ENCODE measurements at regions of chr3 and their contacts with region 1.

Region 1: DNA sequence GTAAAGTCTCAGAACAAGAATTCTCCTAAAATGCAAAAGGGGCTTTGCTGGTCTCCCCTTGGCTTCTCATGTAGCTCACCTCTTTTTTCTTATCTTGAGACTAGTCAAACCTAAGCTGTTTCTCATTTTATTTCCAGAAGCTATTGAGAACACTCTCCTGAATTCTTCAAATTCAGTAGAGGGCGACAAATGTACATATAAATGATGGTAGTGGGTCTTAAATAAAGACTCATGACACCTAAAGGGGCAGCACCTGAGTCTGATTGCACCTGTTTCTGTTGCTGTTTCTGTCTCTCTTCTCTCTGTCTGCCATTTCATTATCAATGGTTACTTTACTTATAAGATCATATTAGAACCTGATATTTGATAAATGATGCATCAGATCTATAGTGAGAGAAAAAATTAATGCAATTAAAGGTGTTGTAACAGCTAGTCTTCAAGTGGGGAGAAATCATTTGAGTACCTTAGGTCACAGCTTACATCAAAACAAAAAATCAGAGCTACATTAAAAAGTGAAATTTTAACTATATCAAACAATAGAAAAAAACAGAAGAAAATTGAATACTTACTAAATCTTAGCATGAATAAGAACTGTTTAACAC is 7.0 kb downstream of the ADIPOQ start:
- DNase-seq: no peak
- ATAC-seq: peak; percentile 79
- H3K4me3 Mint-ChIP-seq: no peak overlapping the region
- H3K27ac Mint-ChIP-seq: peak overlapping the region; percentile 41
- H3K4me1 Mint-ChIP-seq: peaks cover 13% of the 10 kb centered on the region
- H3K27me3 Mint-ChIP-seq: peaks cover 10% of the 10 kb centered on the region
- CTCF ChIP-seq: no peak

Region 2: GRCh38 chr3:186826976-186827731 is 22.3 kb before region 1 on chr3:
- CTCF ChIA-PET with region 1: interaction called, 11 read pairs
- POLR2A ChIA-PET with region 1: interaction called, 7 read pairs
- intact Hi-C with region 1: no loop called
- DNase-seq: peak; percentile 85
- ATAC-seq: peak; percentile 94
- H3K4me3 Mint-ChIP-seq: peak overlapping the region; percentile 71
- H3K27ac Mint-ChIP-seq: no peak overlapping the region
- H3K4me1 Mint-ChIP-seq: peaks cover 22% of the 10 kb centered on the region
- H3K27me3 Mint-ChIP-seq: peaks cover 47% of the 10 kb centered on the region
- CTCF ChIP-seq: no peak

Region 3: DNA sequence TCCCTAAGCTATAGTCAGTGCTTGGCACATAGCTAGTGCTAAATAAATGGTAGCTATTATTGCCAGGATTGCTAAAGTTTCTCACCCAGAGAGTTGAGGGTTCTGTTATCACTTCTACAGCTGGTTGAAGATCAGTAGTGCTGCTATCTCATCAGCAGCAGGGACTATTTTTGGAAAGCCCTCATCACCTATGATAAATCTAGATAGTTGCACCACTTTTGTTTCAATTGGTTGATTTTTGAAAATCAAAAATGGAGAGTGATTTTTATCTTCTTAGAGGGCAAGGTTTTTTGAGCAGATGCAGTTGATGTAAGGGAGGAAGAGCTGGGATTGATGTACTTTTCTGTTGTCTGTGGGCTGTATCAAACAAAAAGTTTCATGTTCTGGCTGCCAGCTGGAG is 182.5 kb after region 1 on chr3:
- CTCF ChIA-PET with region 1: interaction called, 12 read pairs
- POLR2A ChIA-PET with region 1: no interaction called
- intact Hi-C with region 1: no loop called
- DNase-seq: no peak
- ATAC-seq: no peak
- H3K4me3 Mint-ChIP-seq: peak overlapping the region; percentile 69
- H3K27ac Mint-ChIP-seq: peak overlapping the region; percentile 86
- H3K4me1 Mint-ChIP-seq: peaks cover 90% of the 10 kb centered on the region
- H3K27me3 Mint-ChIP-seq: no peaks in the 10 kb centered on the region
- CTCF ChIP-seq: no peak

Region 4: DNA sequence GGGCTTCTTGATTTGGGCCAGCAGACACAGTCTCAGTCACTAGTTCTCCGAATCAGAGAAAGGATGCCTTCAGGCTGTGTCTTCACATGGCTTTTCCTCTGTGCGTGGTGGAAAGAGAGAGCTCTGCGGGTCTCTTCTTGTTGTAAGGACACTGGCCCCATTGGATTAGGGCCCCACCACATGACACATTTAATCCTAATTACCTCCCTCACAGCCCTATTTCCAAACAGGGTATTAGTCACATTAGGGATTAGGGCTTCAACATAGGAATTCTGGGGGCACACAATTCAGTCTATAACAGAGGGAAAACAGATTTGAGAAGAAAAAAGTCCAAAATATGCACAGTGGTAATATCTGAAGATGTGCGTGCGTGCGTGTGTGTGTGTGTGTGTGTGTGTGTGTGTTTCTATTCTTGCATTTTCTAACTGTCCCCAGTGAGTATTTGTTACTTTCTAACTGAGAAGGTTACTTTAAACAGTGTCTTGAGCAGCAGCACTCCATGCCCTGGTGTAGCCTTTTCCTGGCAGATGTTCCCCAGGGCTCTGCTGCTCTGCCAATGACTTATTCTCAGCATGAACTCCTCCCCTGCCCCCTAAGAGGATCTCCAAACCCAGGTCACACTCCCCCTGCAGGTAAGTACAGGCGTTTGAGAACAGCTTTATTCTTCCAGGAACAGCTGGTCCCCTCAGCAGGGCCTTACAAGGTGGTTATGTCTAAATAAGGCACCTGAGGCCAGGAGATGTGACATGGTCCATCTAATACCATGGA is 216.9 kb after region 1 on chr3:
- CTCF ChIA-PET with region 1: interaction called, 37 read pairs
- POLR2A ChIA-PET with region 1: interaction called, 4 read pairs
- intact Hi-C with region 1: loop called (anchors 1 kb)
- DNase-seq: no peak
- ATAC-seq: peak; percentile 39
- H3K4me3 Mint-ChIP-seq: peak overlapping the region; percentile 68
- H3K27ac Mint-ChIP-seq: peak overlapping the region; percentile 92
- H3K4me1 Mint-ChIP-seq: peaks cover 97% of the 10 kb centered on the region
- H3K27me3 Mint-ChIP-seq: no peaks in the 10 kb centered on the region
- CTCF ChIP-seq: no peak

Region 5: DNA sequence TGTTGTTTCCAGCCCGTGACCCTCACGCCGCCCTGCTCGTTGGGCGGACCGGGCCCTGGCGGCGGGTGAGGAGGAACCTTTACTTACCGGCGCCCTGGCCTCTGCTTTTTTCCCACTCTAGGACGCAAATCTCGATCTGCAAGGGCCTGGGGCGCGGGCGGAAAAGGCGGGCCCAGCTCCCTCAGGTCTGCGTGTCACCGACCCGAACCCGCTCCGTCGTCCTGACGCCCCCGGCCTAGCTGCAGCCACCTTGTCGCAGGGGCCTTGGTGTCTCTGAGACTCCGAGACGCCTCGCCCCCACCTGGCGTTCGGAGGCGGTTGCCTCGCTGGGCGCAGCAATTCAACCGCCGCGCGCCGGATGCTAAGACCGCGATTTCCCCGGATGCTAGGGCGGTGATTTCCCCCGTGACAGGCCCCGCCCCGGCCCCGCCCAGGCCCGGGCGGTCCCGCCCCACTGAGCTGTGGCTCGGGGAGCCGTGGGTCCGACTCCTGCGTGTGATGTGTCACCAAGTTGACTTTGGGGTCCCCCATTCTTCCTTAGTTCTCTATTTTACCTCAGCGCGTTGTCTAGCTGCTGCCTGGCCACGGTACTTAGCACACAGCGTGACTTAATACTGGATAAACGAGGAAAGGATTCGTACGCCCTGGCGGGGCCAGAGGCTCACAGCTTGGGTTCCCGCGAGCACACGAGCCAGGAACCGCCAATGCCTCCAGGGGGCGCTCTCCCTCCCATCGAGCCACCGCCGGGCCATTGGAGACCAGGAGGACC is 289.8 kb after region 1 on chr3 and contains the start of gene RPL39L:
- CTCF ChIA-PET with region 1: interaction called, 21 read pairs
- POLR2A ChIA-PET with region 1: interaction called, 3 read pairs
- intact Hi-C with region 1: no loop called
- DNase-seq: peak; percentile 95
- ATAC-seq: peak; percentile 95
- H3K4me3 Mint-ChIP-seq: peak within 1 kb of the TSS; percentile 90
- H3K27ac Mint-ChIP-seq: peak within 1 kb of the TSS; percentile 95
- H3K4me1 Mint-ChIP-seq: peaks cover 19% of the 10 kb centered on the region
- H3K27me3 Mint-ChIP-seq: no peaks in the 10 kb centered on the region
- CTCF ChIP-seq: no peak
- total RNA-seq, gene RPL39L: 4.7 and 6.9 TPM in 2 replicates

Region 6: DNA sequence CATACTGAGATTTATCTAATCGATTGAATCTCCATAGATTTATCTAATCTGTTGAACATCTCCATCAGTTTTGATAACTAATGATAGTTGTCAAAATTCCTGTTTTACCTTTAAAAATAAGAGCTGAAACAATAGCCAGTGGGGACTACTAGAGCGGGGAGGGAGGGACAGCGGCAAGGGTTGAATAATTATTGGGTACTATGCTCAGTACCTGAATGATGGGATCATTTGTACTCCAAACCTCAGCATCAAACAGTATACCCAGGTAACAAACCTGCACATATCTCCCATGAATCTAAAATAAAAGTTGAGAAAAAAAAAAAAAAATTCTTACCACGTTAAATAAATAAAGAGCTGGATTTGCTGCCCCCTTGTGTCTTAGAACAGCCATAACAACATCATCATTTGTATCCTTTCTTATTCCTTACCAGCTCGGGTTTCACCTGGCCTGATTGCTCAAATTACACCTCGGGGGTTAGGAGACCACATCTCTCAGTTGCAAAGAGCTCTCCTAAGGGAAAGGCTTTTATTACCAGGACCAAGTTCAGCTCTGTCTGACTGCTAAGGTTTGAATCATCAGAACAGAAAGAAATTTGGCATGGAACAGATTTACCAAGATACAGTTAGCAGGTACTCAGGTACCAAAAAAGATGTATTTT is 315.5 kb after region 1 on chr3:
- CTCF ChIA-PET with region 1: interaction called, 116 read pairs
- POLR2A ChIA-PET with region 1: interaction called, 12 read pairs
- intact Hi-C with region 1: loop called (anchors 1 kb)
- DNase-seq: no peak
- ATAC-seq: peak; percentile 73
- H3K4me3 Mint-ChIP-seq: no peak overlapping the region
- H3K27ac Mint-ChIP-seq: no peak overlapping the region
- H3K4me1 Mint-ChIP-seq: no peaks in the 10 kb centered on the region
- H3K27me3 Mint-ChIP-seq: peaks cover 14% of the 10 kb centered on the region
- CTCF ChIP-seq: no peak